ENCODE measurements at regions of chr11 and their contacts with region 1.

Region 1: DNA sequence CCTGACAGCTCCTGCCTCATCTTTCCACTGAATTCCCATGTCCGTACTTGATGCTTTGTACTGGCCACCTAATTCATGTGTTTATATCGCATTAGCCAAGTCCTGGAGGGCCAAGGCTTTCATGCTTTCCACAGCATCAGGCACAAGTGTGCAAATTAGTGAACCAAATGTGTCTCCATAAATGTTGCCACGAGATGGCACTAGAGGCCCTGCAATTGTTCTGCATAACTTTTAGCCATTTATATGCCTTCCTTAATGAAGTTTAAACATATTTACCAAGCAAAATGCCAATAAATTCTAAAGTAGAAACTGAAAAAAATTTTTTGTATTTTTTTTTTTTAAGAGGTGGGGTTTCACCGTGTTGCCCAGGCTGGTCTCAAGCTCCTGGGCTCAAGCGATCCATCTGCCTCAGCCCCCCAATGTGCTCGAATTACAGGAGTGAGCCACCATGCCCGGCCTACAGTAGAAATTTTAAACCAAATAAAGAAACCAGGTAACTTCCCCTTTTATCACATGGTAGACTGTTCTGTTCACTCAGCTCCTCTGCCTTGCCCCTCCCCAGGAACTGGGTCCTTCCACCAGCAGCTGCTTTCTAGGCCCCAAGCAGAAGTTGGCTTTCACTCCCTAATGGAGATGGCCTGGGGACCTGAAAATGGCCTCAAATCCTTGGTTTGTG is 20.8 kb upstream of the IL18BP start:
- DNase-seq: peak; percentile 51 to 77
- H3K4me3 ChIP-seq: no peak overlapping the region
- H3K27ac ChIP-seq: no peak overlapping the region
- H3K4me1 ChIP-seq: peaks cover 0 to 19% (median 8%) of the 10 kb centered on the region in 4 donors
- H3K27me3 ChIP-seq: no peaks in the 10 kb centered on the region
- CTCF ChIP-seq: peak in 5 of 7 experiments; percentile 42 to 67 (median 62)
- EP300 ChIP-seq: no peak
- POLR2A ChIP-seq: no peak

Region 2: GRCh38 chr11:72144807-72145560 is 167.1 kb after region 1 on chr11:
- intact Hi-C with region 1: loop called (anchors 5 kb)
- DNase-seq: no peak
- H3K4me3 ChIP-seq: no peak overlapping the region
- H3K27ac ChIP-seq: no peak overlapping the region
- H3K4me1 ChIP-seq: no peaks in the 10 kb centered on the region
- H3K27me3 ChIP-seq: no peaks in the 10 kb centered on the region
- CTCF ChIP-seq: no peak
- EP300 ChIP-seq: no peak
- POLR2A ChIP-seq: no peak